T-cell (primary cell): ENCODE measurements at regions of chr4 and their contacts with region 1.

Region 1: GRCh38 chr4:13285336-13285735 is 198.8 kb downstream of the RAB28 start:
- DNase-seq: no peak
- ATAC-seq: no peak
- H3K4me3 ChIP-seq: no peak overlapping the region
- H3K4me3 Mint-ChIP-seq: no peak overlapping the region
- H3K27ac ChIP-seq: no peak overlapping the region
- H3K27ac Mint-ChIP-seq: no peak overlapping the region
- H3K4me1 ChIP-seq: no peaks in the 10 kb centered on the region
- H3K4me1 Mint-ChIP-seq: no peaks in the 10 kb centered on the region
- H3K27me3 ChIP-seq: peaks cover 0 to 1% of the 10 kb centered on the region in 2 experiments
- H3K27me3 Mint-ChIP-seq: no peaks in the 10 kb centered on the region

Region 2: GRCh38 chr4:12949719-12950490 is 335.4 kb before region 1 on chr4:
- CTCF ChIA-PET with region 1: no interaction called
- POLR2A ChIA-PET with region 1: no interaction called
- DNase-seq: no peak
- ATAC-seq: no peak
- H3K4me3 ChIP-seq: no peak overlapping the region
- H3K4me3 Mint-ChIP-seq: no peak overlapping the region
- H3K27ac ChIP-seq: no peak overlapping the region
- H3K27ac Mint-ChIP-seq: no peak overlapping the region
- H3K4me1 ChIP-seq: no peaks in the 10 kb centered on the region
- H3K4me1 Mint-ChIP-seq: no peaks in the 10 kb centered on the region
- H3K27me3 ChIP-seq: no peaks in the 10 kb centered on the region
- H3K27me3 Mint-ChIP-seq: no peaks in the 10 kb centered on the region

Region 3: DNA sequence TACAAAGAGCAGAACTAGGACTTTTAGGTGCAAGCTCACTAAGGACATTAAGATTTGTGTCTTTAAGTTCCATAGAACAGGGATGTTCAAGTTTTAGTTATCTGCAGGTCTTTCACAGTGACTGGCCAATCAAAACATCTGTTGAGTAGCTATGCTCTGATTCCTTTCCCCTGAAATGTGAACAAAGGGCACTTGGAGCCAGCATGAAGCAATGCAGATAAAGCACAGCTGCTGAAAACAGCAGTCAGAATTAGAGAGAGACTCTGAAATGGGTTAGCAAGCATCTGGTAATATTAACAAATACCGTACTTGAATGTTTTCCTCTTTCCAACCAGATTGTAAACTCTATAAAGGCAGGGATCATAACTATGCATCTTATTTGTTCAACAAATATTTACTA is 78.1 kb before region 1 on chr4:
- CTCF ChIA-PET with region 1: no interaction called
- POLR2A ChIA-PET with region 1: interaction called in 1 of 2 experiments, 10 read pairs
- DNase-seq: no peak
- ATAC-seq: no peak
- H3K4me3 ChIP-seq: no peak overlapping the region
- H3K4me3 Mint-ChIP-seq: no peak overlapping the region
- H3K27ac ChIP-seq: no peak overlapping the region
- H3K27ac Mint-ChIP-seq: no peak overlapping the region
- H3K4me1 ChIP-seq: no peaks in the 10 kb centered on the region
- H3K4me1 Mint-ChIP-seq: no peaks in the 10 kb centered on the region
- H3K27me3 ChIP-seq: no peaks in the 10 kb centered on the region
- H3K27me3 Mint-ChIP-seq: no peaks in the 10 kb centered on the region